GM10248 (cell line): ENCODE measurements at regions of chr11 and their contacts with region 1.

Region 1: GRCh38 chr11:82718307-82718706 is 15.4 kb downstream of the FAM181B start:
- DNase-seq: peak; percentile 47
- CTCF ChIP-seq: peak; percentile 58

Region 2: GRCh38 chr11:82663535-82663934 is 54.8 kb before region 1 on chr11:
- CTCF ChIA-PET with region 1: no interaction called
- POLR2A ChIA-PET with region 1: no interaction called
- DNase-seq: no peak
- CTCF ChIP-seq: no peak

Region 3: DNA sequence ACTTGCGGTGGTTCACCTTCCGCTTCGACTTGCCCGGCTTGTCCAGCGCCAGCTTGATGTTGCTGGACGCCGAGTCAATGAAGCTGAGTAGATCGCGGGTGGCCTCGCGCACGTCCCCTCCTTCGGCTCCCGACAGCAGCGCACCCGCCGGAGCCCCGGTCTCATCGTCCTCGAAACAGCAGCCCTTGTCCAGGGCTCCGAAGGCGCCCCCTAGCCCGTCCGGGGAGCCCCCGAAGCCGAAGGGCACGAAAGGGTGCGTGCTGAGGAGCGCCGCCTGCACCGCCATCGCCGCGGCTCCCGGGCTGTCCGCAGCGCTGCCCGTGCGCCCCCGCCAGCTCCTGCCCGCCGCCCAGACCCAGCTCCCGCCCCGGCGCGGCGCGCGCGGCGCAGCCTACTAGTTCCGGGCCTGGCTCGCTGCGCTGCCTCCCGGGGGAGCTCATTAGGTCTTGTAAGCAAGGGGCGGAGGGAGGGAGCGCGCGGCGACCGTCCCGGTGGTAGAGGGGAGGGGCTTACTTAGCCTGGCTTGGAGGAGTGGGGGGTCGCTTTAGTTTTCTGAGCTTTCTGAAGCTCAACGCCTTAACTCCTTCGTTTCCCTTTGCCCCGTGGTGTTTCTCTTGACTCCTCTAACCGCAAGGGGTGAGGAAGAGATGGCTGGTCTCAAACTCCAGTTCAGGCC is 15.3 kb after region 1 on chr11 and contains the start of gene FAM181B:
- CTCF ChIA-PET with region 1: interaction called, 19 read pairs
- POLR2A ChIA-PET with region 1: no interaction called
- DNase-seq: peak; percentile 23
- CTCF ChIP-seq: no peak

Region 4: GRCh38 chr11:83819933-83820549 is 1101.7 kb after region 1 on chr11:
- CTCF ChIA-PET with region 1: interaction called, 26 read pairs
- POLR2A ChIA-PET with region 1: no interaction called
- DNase-seq: peak; percentile 11
- CTCF ChIP-seq: peak; percentile 30